ENCODE measurements at regions of chr17 and their contacts with region 1.

Region 1: DNA sequence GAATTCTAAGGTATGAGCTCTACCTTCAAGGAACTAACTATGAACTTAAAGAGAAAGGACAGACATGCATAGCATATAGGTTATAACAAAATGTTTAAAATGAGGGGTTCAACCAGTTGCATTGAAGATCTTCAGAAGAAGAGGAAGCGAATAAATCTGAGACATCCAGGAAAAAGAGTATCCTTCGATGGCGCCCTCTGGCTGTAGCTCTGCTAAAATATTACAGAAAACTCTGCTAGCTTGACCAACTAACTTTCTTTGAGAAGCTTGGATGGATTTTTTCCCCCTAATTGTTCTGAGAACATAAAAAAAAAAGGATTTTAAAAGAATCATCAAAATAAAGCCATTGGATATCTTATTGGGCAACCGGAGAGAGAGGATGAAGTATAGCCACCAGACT is 659.9 kb upstream of the SOX9 start:
- DNase-seq: peak in 1 of 2 experiments; percentile 24
- H3K4me3 ChIP-seq: no peak overlapping the region
- H3K4me3 Mint-ChIP-seq: no peak overlapping the region
- H3K27ac Mint-ChIP-seq: no peak overlapping the region
- H3K4me1 ChIP-seq: no peaks in the 10 kb centered on the region
- H3K4me1 Mint-ChIP-seq: no peaks in the 10 kb centered on the region
- H3K27me3 ChIP-seq: no peaks in the 10 kb centered on the region
- H3K27me3 Mint-ChIP-seq: no peaks in the 10 kb centered on the region
- CTCF ChIP-seq: peak; percentile 40 to 45

Region 2: GRCh38 chr17:71118039-71118438 is 342.9 kb before region 1 on chr17:
- CTCF ChIA-PET with region 1: no interaction called
- POLR2A ChIA-PET with region 1: no interaction called
- intact Hi-C with region 1: loop called (anchors 1 kb)
- DNase-seq: peak in 1 of 2 experiments; percentile 23
- H3K4me3 ChIP-seq: no peak overlapping the region
- H3K4me3 Mint-ChIP-seq: no peak overlapping the region
- H3K27ac Mint-ChIP-seq: no peak overlapping the region
- H3K4me1 ChIP-seq: no peaks in the 10 kb centered on the region
- H3K4me1 Mint-ChIP-seq: no peaks in the 10 kb centered on the region
- H3K27me3 ChIP-seq: no peaks in the 10 kb centered on the region
- H3K27me3 Mint-ChIP-seq: peaks cover 7% of the 10 kb centered on the region
- CTCF ChIP-seq: peak in 1 of 2 experiments; percentile 42

Region 3: DNA sequence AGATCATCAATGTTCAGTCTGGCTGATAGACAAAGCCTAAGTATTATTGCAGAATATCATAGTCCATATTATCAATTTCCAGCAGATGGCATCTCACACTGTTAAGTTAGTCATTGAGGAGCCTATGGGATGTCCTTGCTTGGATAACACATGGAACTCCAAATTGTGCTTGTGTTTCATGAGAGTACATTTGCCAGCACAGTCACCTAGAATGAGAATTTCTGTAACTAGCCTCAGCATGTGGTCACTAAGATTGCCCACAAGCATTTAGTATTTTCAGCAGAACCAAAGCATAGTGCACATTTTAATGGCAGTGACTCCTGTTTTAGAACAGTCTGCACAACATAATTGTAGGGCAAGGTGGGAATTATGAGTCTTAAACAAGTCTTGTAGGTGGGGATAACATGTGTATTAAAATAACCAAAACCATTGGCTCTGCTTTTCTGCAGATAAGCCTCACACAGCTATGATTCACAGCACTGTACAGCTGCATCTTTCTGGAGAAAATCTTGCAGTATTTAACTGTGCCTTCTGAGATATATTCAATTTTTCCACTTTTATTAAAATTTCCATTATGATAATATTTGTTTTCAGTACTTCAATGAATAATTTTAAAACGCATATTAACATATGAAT is 222.9 kb before region 1 on chr17:
- CTCF ChIA-PET with region 1: no interaction called
- POLR2A ChIA-PET with region 1: no interaction called
- intact Hi-C with region 1: loop called (anchors 1 kb)
- DNase-seq: peak in 1 of 2 experiments; percentile 11
- H3K4me3 ChIP-seq: no peak overlapping the region
- H3K4me3 Mint-ChIP-seq: no peak overlapping the region
- H3K27ac Mint-ChIP-seq: no peak overlapping the region
- H3K4me1 ChIP-seq: no peaks in the 10 kb centered on the region
- H3K4me1 Mint-ChIP-seq: no peaks in the 10 kb centered on the region
- H3K27me3 ChIP-seq: no peaks in the 10 kb centered on the region
- H3K27me3 Mint-ChIP-seq: peaks cover 2% of the 10 kb centered on the region
- CTCF ChIP-seq: peak in 1 of 2 experiments; percentile 18

Region 4: GRCh38 chr17:71292006-71292405 is 168.9 kb before region 1 on chr17:
- CTCF ChIA-PET with region 1: no interaction called
- POLR2A ChIA-PET with region 1: no interaction called
- intact Hi-C with region 1: loop called (anchors 10 kb)
- DNase-seq: no peak
- H3K4me3 ChIP-seq: no peak overlapping the region
- H3K4me3 Mint-ChIP-seq: no peak overlapping the region
- H3K27ac Mint-ChIP-seq: no peak overlapping the region
- H3K4me1 ChIP-seq: no peaks in the 10 kb centered on the region
- H3K4me1 Mint-ChIP-seq: no peaks in the 10 kb centered on the region
- H3K27me3 ChIP-seq: no peaks in the 10 kb centered on the region
- H3K27me3 Mint-ChIP-seq: peaks cover 1% of the 10 kb centered on the region
- CTCF ChIP-seq: no peak

Region 5: GRCh38 chr17:71409712-71410111 is 51.2 kb before region 1 on chr17:
- CTCF ChIA-PET with region 1: no interaction called
- POLR2A ChIA-PET with region 1: no interaction called
- intact Hi-C with region 1: no loop called
- DNase-seq: no peak
- H3K4me3 ChIP-seq: no peak overlapping the region
- H3K4me3 Mint-ChIP-seq: no peak overlapping the region
- H3K27ac Mint-ChIP-seq: no peak overlapping the region
- H3K4me1 ChIP-seq: no peaks in the 10 kb centered on the region
- H3K4me1 Mint-ChIP-seq: no peaks in the 10 kb centered on the region
- H3K27me3 ChIP-seq: no peaks in the 10 kb centered on the region
- H3K27me3 Mint-ChIP-seq: peaks cover 2% of the 10 kb centered on the region
- CTCF ChIP-seq: no peak